ENCODE measurements at regions of chr20 and their contacts with region 1.

Region 1: DNA sequence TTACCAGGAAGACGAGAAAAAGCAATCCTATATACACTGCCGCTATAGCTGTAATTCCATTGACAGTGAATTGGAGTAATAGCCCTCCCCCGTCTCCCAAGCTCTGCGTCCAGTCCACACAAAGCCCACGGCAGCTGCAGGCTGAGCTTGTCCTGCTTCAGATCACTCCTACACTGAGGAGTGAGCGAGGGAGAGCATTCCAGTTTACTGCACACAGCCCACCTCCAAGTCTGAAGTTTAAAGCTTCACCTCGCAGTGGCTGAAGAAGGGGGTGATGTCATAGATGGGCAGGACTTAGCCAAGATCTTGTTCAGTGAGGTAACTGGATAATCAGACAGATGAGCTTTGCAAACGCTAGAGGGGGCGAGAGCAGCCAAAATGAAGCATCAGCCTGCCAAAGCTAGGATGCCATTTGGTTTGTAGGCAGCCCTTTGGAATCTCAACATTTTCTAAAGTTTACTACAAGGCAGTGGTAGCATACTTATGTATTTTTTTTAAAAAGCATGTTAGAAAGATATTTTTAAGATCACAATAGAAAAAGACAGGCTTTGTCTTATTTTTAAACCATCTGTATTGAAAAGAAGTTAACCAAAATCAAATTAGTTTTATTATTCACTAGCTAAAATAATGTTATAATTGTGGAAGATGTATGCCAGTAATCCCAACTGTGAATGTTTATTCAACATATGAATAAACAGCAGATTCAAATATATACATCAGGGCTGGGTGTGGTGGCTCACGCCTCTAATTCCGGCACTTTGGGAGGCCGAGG is at the start of gene FLRT3:
- DNase-seq: peak; percentile 66 to 97 (median 80)

Region 2: GRCh38 chr20:14360416-14360815 is 22.8 kb after region 1 on chr20:
- intact Hi-C with region 1: no loop called
- DNase-seq: no peak

Region 3: GRCh38 chr20:14512811-14513210 is 175.2 kb after region 1 on chr20:
- intact Hi-C with region 1: no loop called
- DNase-seq: no peak

Region 4: GRCh38 chr20:14948423-14948822 is 610.8 kb after region 1 on chr20:
- intact Hi-C with region 1: loop called (anchors 10 kb)
- DNase-seq: no peak

Region 5: GRCh38 chr20:15927893-15928650 is 1590.5 kb after region 1 on chr20:
- intact Hi-C with region 1: loop called (anchors 5 kb)
- DNase-seq: no peak

Measured in posterior cingulate gyrus (tissue), 11 donors.